Right ventricle myocardium superior (tissue), 1 donor: ENCODE measurements at regions of chr3 and their contacts with region 1.

Region 1: GRCh38 chr3:141561426-141562034 is 74.7 kb downstream of the RASA2 start:
- DNase-seq: no peak
- ATAC-seq: peak; percentile 45

Region 2: GRCh38 chr3:141303481-141304223 is 257.9 kb before region 1 on chr3:
- intact Hi-C with region 1: loop called (anchors 10 kb)
- DNase-seq: no peak
- ATAC-seq: peak; percentile 77

Region 3: GRCh38 chr3:141519587-141519986 is 41.9 kb before region 1 on chr3:
- intact Hi-C with region 1: no loop called
- DNase-seq: no peak
- ATAC-seq: no peak

Region 4: GRCh38 chr3:141608438-141608837 is 46.9 kb after region 1 on chr3:
- intact Hi-C with region 1: no loop called
- DNase-seq: no peak
- ATAC-seq: no peak